Dendritic cell treated with granulocyte-macrophage colony-stimulating factor and Interleukin-4, amounts not matched to agents 40 ng/mL and 50 ng/mL, for 4 days (primary cell): ENCODE measurements at regions of chrX and their contacts with region 1.

Region 1: DNA sequence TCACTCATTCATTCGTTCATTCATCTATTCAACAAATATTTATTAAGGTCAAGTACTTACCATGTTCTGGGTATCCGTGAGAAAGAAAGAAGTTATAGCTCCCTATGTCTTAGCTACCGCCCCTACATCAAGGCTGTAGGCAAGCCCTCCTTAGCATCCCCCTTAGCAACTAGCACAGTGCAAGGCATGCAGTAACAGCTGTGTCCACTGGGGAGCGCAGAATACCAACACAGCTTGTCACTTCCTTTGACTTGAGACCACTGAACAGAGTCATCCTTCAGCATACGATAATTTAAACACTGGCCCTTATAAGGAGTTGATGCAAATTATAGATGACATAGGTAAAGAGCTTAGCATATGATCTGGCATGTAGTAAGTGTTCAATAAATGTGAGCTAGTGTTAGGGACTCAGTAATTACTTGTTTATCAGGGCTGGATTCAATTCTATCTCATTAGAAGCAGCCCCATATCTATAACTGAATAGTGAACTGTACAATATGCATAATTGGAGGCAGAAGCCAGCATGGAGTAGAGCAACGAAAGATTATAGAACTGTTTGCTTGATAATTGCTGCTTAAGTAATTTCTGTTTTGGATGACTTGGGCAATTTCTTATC is 8.7 kb downstream of the KIAA1210 start:
- H3K4me3 Mint-ChIP-seq: no peak overlapping the region
- H3K27ac Mint-ChIP-seq: no peak overlapping the region
- H3K4me1 Mint-ChIP-seq: no peaks in the 10 kb centered on the region
- H3K27me3 Mint-ChIP-seq: peaks cover 4% of the 10 kb centered on the region

Region 2: DNA sequence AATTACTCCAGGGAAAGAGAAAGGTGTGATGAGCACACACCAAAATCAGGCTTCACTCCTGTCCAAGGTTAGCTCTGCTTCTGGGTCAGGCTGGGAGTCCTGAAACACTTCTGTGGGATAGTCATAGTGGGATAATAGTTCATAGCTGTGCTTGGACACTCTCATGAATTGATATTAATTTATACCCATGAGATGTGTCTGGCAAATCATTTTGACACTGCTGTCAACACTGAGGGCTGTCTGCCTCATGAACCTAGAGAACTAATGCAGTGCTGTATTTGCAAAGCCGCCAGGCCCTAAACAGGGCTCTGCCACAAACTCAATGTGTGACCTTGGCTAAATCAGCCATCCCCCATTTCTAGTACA is 92.7 kb after region 1 on chrX:
- intact Hi-C with region 1: loop called (anchors 5 kb)
- H3K4me3 Mint-ChIP-seq: no peak overlapping the region
- H3K27ac Mint-ChIP-seq: no peak overlapping the region
- H3K4me1 Mint-ChIP-seq: no peaks in the 10 kb centered on the region
- H3K27me3 Mint-ChIP-seq: peaks cover 12% of the 10 kb centered on the region

Region 3: DNA sequence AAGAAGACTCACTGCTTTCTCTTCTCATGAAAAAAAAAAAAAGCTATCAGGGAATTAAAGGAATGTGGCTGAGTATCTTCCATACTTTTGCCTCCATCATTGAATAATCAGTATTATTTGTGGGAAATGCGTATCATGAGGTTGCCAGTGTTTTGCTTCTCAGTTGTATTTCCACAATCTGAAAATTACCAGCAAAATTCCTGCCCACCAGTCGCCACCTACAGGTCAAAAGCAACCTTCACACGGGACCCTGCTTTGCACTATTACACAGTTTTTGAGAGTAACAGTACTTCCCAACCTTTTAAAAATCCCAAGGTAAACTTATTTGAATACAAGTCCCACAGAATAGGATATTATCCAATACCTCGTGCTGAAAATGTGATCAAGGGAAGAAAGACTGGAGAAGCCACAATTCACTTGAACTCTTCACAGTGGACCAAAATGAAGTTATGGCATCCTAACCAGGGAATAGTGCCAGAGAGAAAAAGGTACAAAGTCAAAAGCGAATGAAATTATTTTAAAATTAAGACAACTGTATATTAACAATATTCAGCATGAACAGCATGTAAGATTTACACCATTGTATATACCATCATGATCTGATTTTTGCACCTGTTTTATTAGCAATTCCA is 147.6 kb after region 1 on chrX:
- intact Hi-C with region 1: loop called (anchors 2 kb)
- H3K4me3 Mint-ChIP-seq: no peak overlapping the region
- H3K27ac Mint-ChIP-seq: no peak overlapping the region
- H3K4me1 Mint-ChIP-seq: peaks cover 8% of the 10 kb centered on the region
- H3K27me3 Mint-ChIP-seq: peaks cover 22% of the 10 kb centered on the region